ENCODE measurements at regions of chr15 and their contacts with region 1.

Region 1: GRCh38 chr15:72176159-72176558 is 21.4 kb downstream of the GRAMD2A start:
- DNase-seq: no peak
- H3K4me3 ChIP-seq: no peak overlapping the region
- H3K27ac ChIP-seq: no peak overlapping the region
- H3K4me1 ChIP-seq: peaks cover 39% of the 10 kb centered on the region
- H3K27me3 ChIP-seq: no peaks in the 10 kb centered on the region
- CTCF ChIP-seq: no peak

Region 2: GRCh38 chr15:72358650-72359288 is 182.6 kb after region 1 on chr15:
- CTCF ChIA-PET with region 1: no interaction called
- POLR2A ChIA-PET with region 1: interaction called, 20 read pairs
- intact Hi-C with region 1: no loop called
- DNase-seq: peak; percentile 43 to 71
- H3K4me3 ChIP-seq: no peak overlapping the region
- H3K27ac ChIP-seq: no peak overlapping the region
- H3K4me1 ChIP-seq: peaks cover 7% of the 10 kb centered on the region
- H3K27me3 ChIP-seq: no peaks in the 10 kb centered on the region
- CTCF ChIP-seq: no peak